Naive thymus-derived CD4-positive, alpha-beta T cell (primary cell): ENCODE measurements at regions of chr9 and their contacts with region 1.

Region 1: DNA sequence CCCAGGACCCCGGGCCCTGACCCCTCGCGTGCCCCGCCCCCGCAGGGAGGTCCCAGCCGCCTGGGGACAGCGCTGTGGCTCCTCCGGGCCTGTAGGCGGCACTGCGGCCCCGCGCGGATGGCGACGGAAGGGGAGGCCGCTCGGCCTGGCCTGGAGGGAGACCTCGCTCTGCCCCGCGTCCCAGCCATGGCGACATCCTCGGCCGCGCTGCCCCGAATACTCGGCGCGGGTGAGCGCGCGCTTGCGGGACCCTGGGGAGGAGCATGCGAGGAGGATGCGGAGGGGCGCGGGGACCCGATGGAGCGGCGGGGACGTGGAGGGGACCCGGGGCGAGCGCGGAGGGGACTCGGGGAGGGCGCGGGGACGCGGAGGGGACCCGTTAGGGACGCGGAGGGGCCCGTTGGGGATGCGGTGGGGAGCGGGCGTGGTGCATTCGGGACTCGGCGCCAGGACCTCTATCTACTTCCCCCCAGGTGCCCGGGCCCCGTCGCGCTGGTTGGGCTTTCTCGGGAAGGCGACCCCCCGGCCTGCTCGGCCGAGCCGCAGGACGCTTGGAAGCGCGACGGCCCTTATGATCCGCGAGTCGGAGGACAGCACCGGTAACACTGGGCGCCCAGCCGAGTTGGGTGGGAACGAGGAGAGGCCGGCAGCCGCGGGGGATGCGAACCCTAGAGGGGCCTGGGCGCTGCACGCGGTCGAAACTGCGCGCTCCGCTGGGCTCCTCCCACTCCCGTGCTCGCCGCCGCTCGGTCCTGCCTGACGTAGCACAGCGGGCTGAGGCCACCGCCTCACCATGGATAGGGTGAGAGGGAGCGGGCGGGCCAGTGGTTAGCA is at the start of gene MRPS2:
- DNase-seq: peak; percentile 62 to 93 (median 80)
- ATAC-seq: peak; percentile 97
- H3K4me3 ChIP-seq: peak within 1 kb of the TSS; percentile 91
- H3K4me3 Mint-ChIP-seq: peak within 1 kb of the TSS; percentile 80 to 95 (median 88)
- H3K27ac ChIP-seq: peak within 1 kb of the TSS; percentile 77
- H3K27ac Mint-ChIP-seq: peak within 1 kb of the TSS in 8 of 9 donors; percentile 11 to 96 (median 81)
- H3K4me1 ChIP-seq: peaks cover 10 to 14% of the 10 kb centered on the region in 2 donors
- H3K4me1 Mint-ChIP-seq: peaks cover 12 to 41% (median 18%) of the 10 kb centered on the region in 7 donors
- H3K27me3 ChIP-seq: no peaks in the 10 kb centered on the region
- H3K27me3 Mint-ChIP-seq: no peaks in the 10 kb centered on the region
- total RNA-seq, gene MRPS2: 19.4 to 32.3 (median 28.3) TPM

Region 2: DNA sequence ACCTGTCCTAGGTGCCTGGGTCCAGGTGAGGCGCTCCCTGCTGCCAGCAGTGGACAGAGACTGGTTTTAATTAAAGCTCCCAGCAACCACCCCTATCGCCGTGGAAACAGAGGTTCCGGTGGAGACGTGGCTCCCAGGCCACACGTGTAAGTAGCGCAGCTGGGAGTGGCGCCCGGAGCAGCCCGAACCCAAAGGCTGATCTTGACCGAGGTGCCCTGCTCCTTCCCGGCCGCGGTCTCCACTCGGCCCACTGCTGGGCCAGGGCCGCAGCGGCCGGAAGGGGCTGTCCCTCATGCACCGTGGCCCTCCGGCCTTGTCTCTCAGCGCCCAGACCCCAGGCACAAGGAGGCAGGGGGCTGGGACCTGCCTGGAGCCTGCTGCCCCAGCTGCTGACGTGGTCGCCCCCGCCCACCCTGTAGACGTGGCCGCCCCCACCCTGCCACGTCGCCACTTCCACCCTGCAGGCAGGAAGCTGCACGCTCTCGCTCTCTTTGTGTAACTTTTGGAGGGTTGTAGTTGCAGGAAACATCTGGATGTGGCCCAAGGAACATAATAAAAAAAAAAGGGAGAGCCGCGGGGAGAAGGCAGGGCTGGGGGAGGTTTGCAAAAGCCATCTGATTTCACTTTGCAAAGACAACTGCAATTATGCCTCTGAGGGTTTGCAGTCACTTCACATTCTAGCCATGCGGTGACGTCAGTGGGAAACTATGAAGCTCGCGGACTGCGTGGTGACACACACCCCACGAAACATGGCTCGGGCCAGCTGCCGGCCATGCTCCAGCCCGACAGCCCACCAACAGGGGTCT is 1044.6 kb before region 1 on chr9:
- CTCF ChIA-PET with region 1: no interaction called
- POLR2A ChIA-PET with region 1: no interaction called
- intact Hi-C with region 1: loop called in 1 of 2 experiments (anchors 5 kb)
- DNase-seq: peak; percentile 57 to 87 (median 80)
- ATAC-seq: peak; percentile 91
- H3K4me3 ChIP-seq: peak overlapping the region; percentile 63
- H3K4me3 Mint-ChIP-seq: peak overlapping the region; percentile 66 to 96 (median 84)
- H3K27ac ChIP-seq: peak overlapping the region; percentile 84
- H3K27ac Mint-ChIP-seq: peak overlapping the region; percentile 79 to 99 (median 95)
- H3K4me1 ChIP-seq: peaks cover 10 to 20% of the 10 kb centered on the region in 2 donors
- H3K4me1 Mint-ChIP-seq: peaks cover 0 to 19% (median 11%) of the 10 kb centered on the region in 7 donors
- H3K27me3 ChIP-seq: no peaks in the 10 kb centered on the region
- H3K27me3 Mint-ChIP-seq: no peaks in the 10 kb centered on the region